CD8-positive, alpha-beta T cell (primary cell): ENCODE measurements at regions of chr1 and their contacts with region 1.

Region 1: GRCh38 chr1:22052115-22053016 is at the start of gene CDC42:
- DNase-seq: peak; percentile 95 to 98 (median 96)
- ATAC-seq: peak; percentile 90
- H3K4me3 ChIP-seq: peak within 1 kb of the TSS; percentile 75 to 88
- H3K4me3 Mint-ChIP-seq: peak within 1 kb of the TSS; percentile 98
- H3K27ac ChIP-seq: peak within 1 kb of the TSS; percentile 98 to 99
- H3K27ac Mint-ChIP-seq: peak within 1 kb of the TSS; percentile 99
- H3K4me1 ChIP-seq: peaks cover 54% of the 10 kb centered on the region
- H3K4me1 Mint-ChIP-seq: peaks cover 60% of the 10 kb centered on the region
- H3K27me3 ChIP-seq: no peaks in the 10 kb centered on the region
- H3K27me3 Mint-ChIP-seq: no peaks in the 10 kb centered on the region
- CTCF ChIP-seq: no peak
- total RNA-seq, gene CDC42: 327 to 377 TPM

Region 2: GRCh38 chr1:22031214-22031962 is 21.0 kb before region 1 on chr1:
- CTCF ChIA-PET with region 1: interaction called, 42 read pairs
- POLR2A ChIA-PET with region 1: interaction called, 13 read pairs
- intact Hi-C with region 1: no loop called
- DNase-seq: peak in 4 of 9 experiments; percentile 35 to 55 (median 40)
- ATAC-seq: peak; percentile 87
- H3K4me3 ChIP-seq: peak overlapping the region in 1 of 2 experiments; percentile 27
- H3K4me3 Mint-ChIP-seq: peak overlapping the region; percentile 57
- H3K27ac ChIP-seq: peak overlapping the region; percentile 13 to 25
- H3K27ac Mint-ChIP-seq: peak overlapping the region; percentile 88
- H3K4me1 ChIP-seq: peaks cover 27% of the 10 kb centered on the region
- H3K4me1 Mint-ChIP-seq: peaks cover 55% of the 10 kb centered on the region
- H3K27me3 ChIP-seq: no peaks in the 10 kb centered on the region
- H3K27me3 Mint-ChIP-seq: no peaks in the 10 kb centered on the region
- CTCF ChIP-seq: no peak

Region 3: GRCh38 chr1:22039594-22040285 is 12.6 kb before region 1 on chr1:
- CTCF ChIA-PET with region 1: interaction called, 40 read pairs
- POLR2A ChIA-PET with region 1: interaction called, 129 read pairs
- intact Hi-C with region 1: loop called (anchors 1 kb)
- DNase-seq: peak; percentile 80 to 99 (median 90)
- ATAC-seq: peak; percentile 94
- H3K4me3 ChIP-seq: peak overlapping the region; percentile 40 to 46
- H3K4me3 Mint-ChIP-seq: peak overlapping the region; percentile 77
- H3K27ac ChIP-seq: peak overlapping the region; percentile 92 to 93
- H3K27ac Mint-ChIP-seq: peak overlapping the region; percentile 99
- H3K4me1 ChIP-seq: peaks cover 69% of the 10 kb centered on the region
- H3K4me1 Mint-ChIP-seq: peaks cover 56% of the 10 kb centered on the region
- H3K27me3 ChIP-seq: no peaks in the 10 kb centered on the region
- H3K27me3 Mint-ChIP-seq: no peaks in the 10 kb centered on the region
- CTCF ChIP-seq: no peak

Region 4: GRCh38 chr1:22064751-22065402 is 12.5 kb after region 1 on chr1:
- CTCF ChIA-PET with region 1: interaction called, 11 read pairs
- POLR2A ChIA-PET with region 1: interaction called, 8 read pairs
- intact Hi-C with region 1: no loop called
- DNase-seq: no peak
- ATAC-seq: no peak
- H3K4me3 ChIP-seq: no peak overlapping the region
- H3K4me3 Mint-ChIP-seq: peak overlapping the region; percentile 57
- H3K27ac ChIP-seq: peak overlapping the region in 1 of 2 experiments; percentile 26
- H3K27ac Mint-ChIP-seq: peak overlapping the region; percentile 87
- H3K4me1 ChIP-seq: peaks cover 90% of the 10 kb centered on the region
- H3K4me1 Mint-ChIP-seq: peaks cover 86% of the 10 kb centered on the region
- H3K27me3 ChIP-seq: no peaks in the 10 kb centered on the region
- H3K27me3 Mint-ChIP-seq: no peaks in the 10 kb centered on the region
- CTCF ChIP-seq: no peak

Region 5: GRCh38 chr1:22089787-22090186 is 37.4 kb after region 1 on chr1:
- CTCF ChIA-PET with region 1: interaction called, 3 read pairs
- POLR2A ChIA-PET with region 1: interaction called, 6 read pairs
- intact Hi-C with region 1: loop called in 1 of 2 experiments (anchors 5 kb)
- DNase-seq: peak in 1 of 9 experiments; percentile 33
- ATAC-seq: no peak
- H3K4me3 ChIP-seq: peak overlapping the region in 1 of 2 experiments; percentile 13
- H3K4me3 Mint-ChIP-seq: peak overlapping the region; percentile 71
- H3K27ac ChIP-seq: peak overlapping the region; percentile 6 to 46
- H3K27ac Mint-ChIP-seq: peak overlapping the region; percentile 76
- H3K4me1 ChIP-seq: peaks cover 67% of the 10 kb centered on the region
- H3K4me1 Mint-ChIP-seq: peaks cover 87% of the 10 kb centered on the region
- H3K27me3 ChIP-seq: no peaks in the 10 kb centered on the region
- H3K27me3 Mint-ChIP-seq: no peaks in the 10 kb centered on the region
- CTCF ChIP-seq: no peak